ENCODE measurements at regions of chr7 and their contacts with region 1.

Region 1: DNA sequence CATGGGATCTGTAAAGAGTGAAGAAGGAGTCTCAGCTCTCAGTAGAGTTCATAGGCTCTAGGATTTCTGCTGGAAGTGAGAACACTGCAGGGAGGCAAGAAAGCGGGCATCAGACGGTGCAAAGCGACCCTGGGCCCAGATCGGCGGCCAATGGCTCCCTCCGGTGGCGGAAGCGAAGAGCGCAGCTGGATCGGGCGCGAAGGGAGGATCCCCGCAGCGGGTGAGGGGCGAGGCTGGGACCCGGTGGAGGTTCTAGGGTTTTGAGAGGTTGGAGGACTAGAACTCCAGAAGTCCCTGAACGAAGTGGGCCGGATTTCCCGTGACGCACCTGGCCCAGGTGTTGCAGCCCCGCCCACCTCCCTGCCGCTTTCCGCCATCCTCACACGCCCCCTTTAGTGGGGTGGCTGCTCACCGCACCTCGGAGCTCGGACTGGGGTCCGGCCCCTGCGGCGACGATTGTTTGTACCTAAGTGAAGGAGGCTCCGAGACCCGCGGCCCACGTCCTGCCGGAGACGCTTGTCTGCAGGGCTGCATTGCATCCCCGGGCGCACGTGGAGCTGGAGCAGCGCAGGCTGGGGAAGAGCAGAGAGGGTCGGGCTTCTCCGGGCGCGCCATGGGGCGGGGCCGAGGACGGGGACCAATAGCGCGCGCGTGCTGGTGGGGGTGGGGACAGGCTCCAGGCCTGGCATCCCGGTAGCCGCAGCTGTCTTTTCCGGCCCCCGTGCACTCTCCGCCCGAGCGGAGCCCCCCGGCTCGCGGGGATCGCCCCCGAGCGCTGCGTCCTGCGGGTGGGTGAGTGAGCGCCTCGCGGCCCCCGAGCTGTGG is at the start of gene SLC12A9:
- DNase-seq: peak; percentile 100
- H3K4me3 ChIP-seq: peak within 1 kb of the TSS; percentile 62 to 87
- H3K27ac ChIP-seq: peak within 1 kb of the TSS in 1 of 2 experiments; percentile 3; a peak in 1 of 4 replicates
- H3K4me1 ChIP-seq: peaks cover 7% of the 10 kb centered on the region in 2 experiments; a peak in 2 of 4 replicates
- H3K27me3 ChIP-seq: no peaks in the 10 kb centered on the region
- CTCF ChIP-seq: peak; percentile 99
- EP300 ChIP-seq: no peak; a peak in 1 of 4 replicates
- RAD21 ChIP-seq: peak; percentile 99
- polyA plus RNA-seq, gene SLC12A9: 29.7 and 31.0 TPM in 2 replicates

Region 2: GRCh38 chr7:100444311-100445278 is 407.7 kb before region 1 on chr7:
- CTCF ChIA-PET with region 1: no interaction called
- POLR2A ChIA-PET with region 1: no interaction called
- DNase-seq: no peak
- H3K4me3 ChIP-seq: no peak overlapping the region
- H3K27ac ChIP-seq: peak overlapping the region in 1 of 2 experiments; percentile 50; a peak in 2 of 4 replicates
- H3K4me1 ChIP-seq: peaks cover 0 to 4% of the 10 kb centered on the region in 2 experiments; a peak in 2 of 4 replicates
- H3K27me3 ChIP-seq: no peaks in the 10 kb centered on the region
- CTCF ChIP-seq: no peak
- EP300 ChIP-seq: no peak
- RAD21 ChIP-seq: no peak

Region 3: DNA sequence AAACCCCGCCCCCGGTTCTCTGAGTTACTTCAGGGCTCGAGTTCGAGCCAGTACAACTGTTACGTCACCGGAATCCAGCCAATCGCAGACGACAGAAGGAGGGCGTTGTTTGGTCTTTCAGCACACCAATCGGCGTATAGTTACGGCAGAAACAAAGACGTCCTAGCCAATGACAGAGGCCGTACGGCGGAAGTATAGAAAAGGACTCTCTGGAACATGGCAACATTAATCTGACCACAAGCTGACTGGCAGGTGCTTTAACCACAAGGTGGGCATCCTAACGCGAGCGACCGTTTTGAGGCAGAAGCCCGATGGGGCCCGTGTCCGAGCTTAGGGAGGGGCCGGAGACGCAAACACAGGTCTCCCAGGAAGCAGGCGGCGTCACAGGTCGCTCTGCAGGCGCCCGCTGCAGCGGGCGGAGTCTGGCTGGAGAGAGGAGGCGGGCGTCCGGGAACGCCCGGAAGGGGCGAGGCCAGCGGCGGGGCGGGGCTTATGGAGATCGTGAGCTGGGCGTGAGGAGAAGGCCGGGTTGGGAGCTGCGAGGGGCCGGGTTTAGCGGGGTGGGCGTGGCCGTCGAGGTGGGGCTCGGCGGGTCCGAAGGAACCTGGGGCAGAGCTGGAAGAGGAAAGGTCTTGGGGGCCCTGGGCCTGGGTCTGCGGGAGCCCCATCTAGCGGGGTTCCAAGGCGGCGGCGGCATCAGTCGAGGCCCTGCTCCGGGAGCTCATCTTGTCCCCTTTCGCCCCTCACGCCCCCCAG is 240.1 kb before region 1 on chr7 and contains the start of gene MOSPD3:
- CTCF ChIA-PET with region 1: interaction called, 21 read pairs
- POLR2A ChIA-PET with region 1: no interaction called
- DNase-seq: peak; percentile 100
- H3K4me3 ChIP-seq: peak within 1 kb of the TSS; percentile 67 to 80
- H3K27ac ChIP-seq: peak within 1 kb of the TSS; percentile 82 to 93
- H3K4me1 ChIP-seq: peaks cover 0 to 8% of the 10 kb centered on the region in 2 experiments; a peak in 1 of 4 replicates
- H3K27me3 ChIP-seq: no peaks in the 10 kb centered on the region
- CTCF ChIP-seq: no peak
- EP300 ChIP-seq: 0 out of 4 replicates have a peak, but pooled peaks of 1 of the 2 experiments have one; percentile 37
- RAD21 ChIP-seq: no peak
- polyA plus RNA-seq, gene MOSPD3: 30.0 and 61.7 TPM in 2 replicates

Region 4: GRCh38 chr7:100719523-100720319 is 132.5 kb before region 1 on chr7:
- CTCF ChIA-PET with region 1: interaction called, 74 read pairs
- POLR2A ChIA-PET with region 1: no interaction called
- DNase-seq: no peak
- H3K4me3 ChIP-seq: 0 out of 4 replicates have a peak overlapping the region, but pooled peaks of 1 of the 2 experiments have one; percentile 29
- H3K27ac ChIP-seq: no peak overlapping the region
- H3K4me1 ChIP-seq: peaks cover 0 to 3% of the 10 kb centered on the region in 2 experiments; a peak in 1 of 4 replicates
- H3K27me3 ChIP-seq: peaks cover 28% of the 10 kb centered on the region
- CTCF ChIP-seq: peak; percentile 47
- EP300 ChIP-seq: no peak
- RAD21 ChIP-seq: peak; percentile 56

Region 5: GRCh38 chr7:100773491-100773890 is 78.8 kb before region 1 on chr7:
- CTCF ChIA-PET with region 1: interaction called, 10 read pairs
- POLR2A ChIA-PET with region 1: no interaction called
- DNase-seq: no peak
- H3K4me3 ChIP-seq: no peak overlapping the region
- H3K27ac ChIP-seq: no peak overlapping the region
- H3K4me1 ChIP-seq: no peaks in the 10 kb centered on the region
- H3K27me3 ChIP-seq: peaks cover 76% of the 10 kb centered on the region
- CTCF ChIP-seq: no peak
- EP300 ChIP-seq: no peak
- RAD21 ChIP-seq: no peak

Region 6: GRCh38 chr7:100803398-100804233 is 48.6 kb before region 1 on chr7:
- CTCF ChIA-PET with region 1: interaction called, 398 read pairs
- POLR2A ChIA-PET with region 1: interaction called, 30 read pairs
- DNase-seq: peak; percentile 93
- H3K4me3 ChIP-seq: no peak overlapping the region
- H3K27ac ChIP-seq: peak overlapping the region; percentile 53 to 58
- H3K4me1 ChIP-seq: peaks cover 21% of the 10 kb centered on the region in 2 experiments; a peak in 3 of 4 replicates
- H3K27me3 ChIP-seq: no peaks in the 10 kb centered on the region
- CTCF ChIP-seq: no peak
- EP300 ChIP-seq: peak in 1 of 2 experiments; percentile 26; a peak in 1 of 4 replicates
- RAD21 ChIP-seq: no peak

Region 7: GRCh38 chr7:100837099-100837836 is 15.0 kb before region 1 on chr7:
- CTCF ChIA-PET with region 1: interaction called, 24 read pairs
- POLR2A ChIA-PET with region 1: no interaction called
- DNase-seq: peak; percentile 81
- H3K4me3 ChIP-seq: no peak overlapping the region
- H3K27ac ChIP-seq: no peak overlapping the region; a peak in 1 of 4 replicates
- H3K4me1 ChIP-seq: no peaks in the 10 kb centered on the region
- H3K27me3 ChIP-seq: no peaks in the 10 kb centered on the region
- CTCF ChIP-seq: no peak
- EP300 ChIP-seq: no peak
- RAD21 ChIP-seq: no peak

Region 8: GRCh38 chr7:100889761-100890634 is 37.7 kb after region 1 on chr7:
- CTCF ChIA-PET with region 1: interaction called, 16 read pairs
- POLR2A ChIA-PET with region 1: interaction called, 5 read pairs
- DNase-seq: peak; percentile 100
- H3K4me3 ChIP-seq: peak overlapping the region; percentile 71 to 78
- H3K27ac ChIP-seq: peak overlapping the region; percentile 82 to 97
- H3K4me1 ChIP-seq: peaks cover 7 to 40% of the 10 kb centered on the region in 2 experiments
- H3K27me3 ChIP-seq: 0 out of 2 replicates have a peak, but pooled peaks cover under 1% of the 10 kb centered on the region
- CTCF ChIP-seq: no peak
- EP300 ChIP-seq: no peak
- RAD21 ChIP-seq: no peak

Region 9: DNA sequence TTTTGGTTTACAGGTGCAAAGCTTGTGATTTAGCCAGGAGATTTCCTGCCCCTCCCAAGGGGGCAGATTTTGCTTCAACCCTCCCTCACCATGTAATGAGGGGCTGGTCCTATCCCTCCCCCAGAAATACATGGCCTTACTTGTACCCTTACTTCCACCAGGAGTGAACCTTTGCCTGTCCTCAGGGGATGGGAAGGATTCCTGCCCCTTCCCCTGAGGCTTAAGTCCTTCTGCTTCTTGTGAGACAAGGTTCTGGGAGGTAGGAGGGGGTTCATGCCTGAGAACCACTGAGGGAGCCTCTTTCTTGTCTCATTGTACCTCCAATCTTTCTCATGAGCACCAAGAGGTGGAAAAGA is 77.5 kb after region 1 on chr7:
- CTCF ChIA-PET with region 1: no interaction called
- POLR2A ChIA-PET with region 1: no interaction called
- DNase-seq: no peak
- H3K4me3 ChIP-seq: no peak overlapping the region
- H3K27ac ChIP-seq: no peak overlapping the region
- H3K4me1 ChIP-seq: no peaks in the 10 kb centered on the region
- H3K27me3 ChIP-seq: peaks cover 30% of the 10 kb centered on the region; the same call in 1 of the 2 replicates
- CTCF ChIP-seq: no peak
- EP300 ChIP-seq: no peak
- RAD21 ChIP-seq: no peak

Measured in SK-N-SH (cell line).